PC-3 (cell line): ENCODE measurements at regions of chr2 and their contacts with region 1.

Region 1: GRCh38 chr2:163182764-163183354 is 344.3 kb upstream of the KCNH7 start:
- DNase-seq: peak; percentile 14
- ATAC-seq: no peak
- H3K4me3 ChIP-seq: no peak overlapping the region
- H3K27ac ChIP-seq: no peak overlapping the region
- H3K4me1 ChIP-seq: no peaks in the 10 kb centered on the region
- H3K27me3 ChIP-seq: peaks cover 10% of the 10 kb centered on the region
- CTCF ChIP-seq: peak; percentile 66

Region 2: DNA sequence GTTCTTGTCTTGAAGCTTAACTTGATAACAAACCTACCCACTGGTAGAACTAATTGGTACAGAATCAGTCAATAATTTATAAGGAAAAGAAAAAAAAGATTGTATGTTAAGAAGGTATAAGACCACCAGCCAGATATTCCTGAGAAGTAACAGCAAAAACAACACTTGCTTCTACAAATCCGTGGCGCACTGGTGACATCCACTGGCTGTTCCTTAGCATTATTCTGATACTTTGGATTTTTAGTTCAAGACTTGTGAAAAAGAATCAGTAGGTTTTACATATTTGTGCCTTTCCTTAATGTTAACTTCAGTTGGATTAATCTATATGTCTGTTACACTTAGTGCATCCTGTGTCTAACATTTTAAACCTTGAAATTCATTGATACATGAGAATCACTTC is 1296.6 kb after region 1 on chr2:
- CTCF ChIA-PET with region 1: no interaction called
- POLR2A ChIA-PET with region 1: no interaction called
- intact Hi-C with region 1: loop called (anchors 1 kb)
- DNase-seq: peak; percentile 40
- ATAC-seq: no peak
- H3K4me3 ChIP-seq: no peak overlapping the region
- H3K27ac ChIP-seq: no peak overlapping the region
- H3K4me1 ChIP-seq: no peaks in the 10 kb centered on the region
- H3K27me3 ChIP-seq: peaks cover 67% of the 10 kb centered on the region
- CTCF ChIP-seq: peak; percentile 71